ENCODE measurements at regions of chr11 and their contacts with region 1.

Region 1: GRCh38 chr11:14029971-14030920 is 67.7 kb downstream of the SPON1 start:
- DNase-seq: peak; percentile 82
- H3K4me3 ChIP-seq: no peak overlapping the region
- H3K27ac ChIP-seq: peak overlapping the region; percentile 64 to 78 (median 70)
- H3K4me1 ChIP-seq: peaks cover 0 to 42% (median 31%) of the 10 kb centered on the region in 4 donors
- H3K27me3 ChIP-seq: no peaks in the 10 kb centered on the region
- CTCF ChIP-seq: no peak
- EP300 ChIP-seq: no peak
- POLR2A ChIP-seq: no peak

Region 2: GRCh38 chr11:13962562-13963168 is 67.6 kb before region 1 on chr11 and contains the start of gene SPON1:
- intact Hi-C with region 1: loop called (anchors 5 kb)
- DNase-seq: peak; percentile 75
- H3K4me3 ChIP-seq: peak within 1 kb of the TSS; percentile 33 to 54 (median 50)
- H3K27ac ChIP-seq: peak within 1 kb of the TSS; percentile 32 to 69 (median 60)
- H3K4me1 ChIP-seq: peaks cover 0 to 30% (median 27%) of the 10 kb centered on the region in 4 donors
- H3K27me3 ChIP-seq: peaks cover 6 to 69% (median 34%) of the 10 kb centered on the region in 3 donors
- CTCF ChIP-seq: no peak
- EP300 ChIP-seq: no peak
- POLR2A ChIP-seq: no peak
- total RNA-seq, gene SPON1: 10.0 to 36.8 (median 24.1) TPM

Region 3: GRCh38 chr11:13984616-13985450 is 45.4 kb before region 1 on chr11:
- intact Hi-C with region 1: loop called (anchors 5 kb)
- DNase-seq: no peak
- H3K4me3 ChIP-seq: no peak overlapping the region
- H3K27ac ChIP-seq: peak overlapping the region in 3 of 4 donors; percentile 70 to 82 (median 76)
- H3K4me1 ChIP-seq: peaks cover 0 to 43% (median 31%) of the 10 kb centered on the region in 4 donors
- H3K27me3 ChIP-seq: no peaks in the 10 kb centered on the region
- CTCF ChIP-seq: no peak
- EP300 ChIP-seq: no peak
- POLR2A ChIP-seq: no peak

Region 4: GRCh38 chr11:14054116-14055107 is 24.2 kb after region 1 on chr11:
- intact Hi-C with region 1: no loop called
- DNase-seq: no peak
- H3K4me3 ChIP-seq: no peak overlapping the region
- H3K27ac ChIP-seq: no peak overlapping the region
- H3K4me1 ChIP-seq: no peaks in the 10 kb centered on the region
- H3K27me3 ChIP-seq: no peaks in the 10 kb centered on the region
- CTCF ChIP-seq: no peak
- EP300 ChIP-seq: no peak
- POLR2A ChIP-seq: no peak